Panc1 (cell line): ENCODE measurements at regions of chr5 and their contacts with region 1.

Region 1: GRCh38 chr5:149828161-149828884 is 98.2 kb downstream of the PPARGC1B start:
- DNase-seq: peak; percentile 77
- ATAC-seq: peak; percentile 90
- H3K4me3 ChIP-seq: no peak overlapping the region
- H3K27ac ChIP-seq: no peak overlapping the region
- H3K4me1 ChIP-seq: no peaks in the 10 kb centered on the region
- H3K27me3 ChIP-seq: no peaks in the 10 kb centered on the region
- CTCF ChIP-seq: peak; percentile 88

Region 2: DNA sequence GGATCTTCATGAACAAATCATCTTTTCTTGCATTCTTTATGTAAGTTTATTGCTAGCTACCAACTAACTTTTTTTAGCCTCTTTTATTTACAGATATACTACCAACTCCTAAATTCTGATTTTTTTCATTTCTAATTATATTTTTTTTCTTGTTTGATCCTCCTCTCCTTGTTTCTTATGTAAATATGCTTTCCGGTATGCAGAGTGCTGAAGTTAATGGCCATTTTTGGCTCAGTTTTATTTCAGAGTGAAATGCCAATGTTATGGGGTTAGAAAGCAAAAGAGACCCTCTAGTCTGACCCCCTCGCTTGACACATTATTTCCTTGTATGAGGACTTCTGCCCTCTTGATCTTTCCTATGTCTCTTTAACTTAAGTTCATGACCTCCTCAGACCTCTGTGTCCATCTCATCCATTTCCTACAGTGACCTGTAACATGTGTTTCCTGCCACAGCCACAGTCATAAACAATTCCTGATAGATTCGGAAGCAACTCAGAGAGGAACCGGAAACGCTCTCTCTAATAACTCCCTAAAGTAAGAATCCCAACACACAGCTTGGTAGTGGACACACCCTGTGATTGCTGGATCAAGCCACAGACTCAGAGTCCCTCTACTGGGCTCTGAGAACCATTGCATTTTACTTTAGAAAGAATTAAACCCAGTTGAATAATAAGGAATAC is 599.6 kb before region 1 on chr5:
- CTCF ChIA-PET with region 1: no interaction called
- POLR2A ChIA-PET with region 1: no interaction called
- in situ Hi-C with region 1: no loop called
- intact Hi-C with region 1: no loop called
- DNase-seq: peak; percentile 38
- ATAC-seq: peak; percentile 90
- H3K4me3 ChIP-seq: no peak overlapping the region
- H3K27ac ChIP-seq: no peak overlapping the region
- H3K4me1 ChIP-seq: no peaks in the 10 kb centered on the region
- H3K27me3 ChIP-seq: no peaks in the 10 kb centered on the region
- CTCF ChIP-seq: peak; percentile 78

Region 3: GRCh38 chr5:149636851-149637246 is 191.5 kb before region 1 on chr5:
- CTCF ChIA-PET with region 1: interaction called, 19 read pairs
- POLR2A ChIA-PET with region 1: no interaction called
- in situ Hi-C with region 1: no loop called
- intact Hi-C with region 1: loop called (anchors 1 kb)
- DNase-seq: peak; percentile 52
- ATAC-seq: peak; percentile 90
- H3K4me3 ChIP-seq: no peak overlapping the region
- H3K27ac ChIP-seq: no peak overlapping the region
- H3K4me1 ChIP-seq: peaks cover 5% of the 10 kb centered on the region
- H3K27me3 ChIP-seq: no peaks in the 10 kb centered on the region
- CTCF ChIP-seq: peak; percentile 91